Heart left ventricle (tissue), 16 donors: ENCODE measurements at regions of chr1 and their contacts with region 1.

Region 1: DNA sequence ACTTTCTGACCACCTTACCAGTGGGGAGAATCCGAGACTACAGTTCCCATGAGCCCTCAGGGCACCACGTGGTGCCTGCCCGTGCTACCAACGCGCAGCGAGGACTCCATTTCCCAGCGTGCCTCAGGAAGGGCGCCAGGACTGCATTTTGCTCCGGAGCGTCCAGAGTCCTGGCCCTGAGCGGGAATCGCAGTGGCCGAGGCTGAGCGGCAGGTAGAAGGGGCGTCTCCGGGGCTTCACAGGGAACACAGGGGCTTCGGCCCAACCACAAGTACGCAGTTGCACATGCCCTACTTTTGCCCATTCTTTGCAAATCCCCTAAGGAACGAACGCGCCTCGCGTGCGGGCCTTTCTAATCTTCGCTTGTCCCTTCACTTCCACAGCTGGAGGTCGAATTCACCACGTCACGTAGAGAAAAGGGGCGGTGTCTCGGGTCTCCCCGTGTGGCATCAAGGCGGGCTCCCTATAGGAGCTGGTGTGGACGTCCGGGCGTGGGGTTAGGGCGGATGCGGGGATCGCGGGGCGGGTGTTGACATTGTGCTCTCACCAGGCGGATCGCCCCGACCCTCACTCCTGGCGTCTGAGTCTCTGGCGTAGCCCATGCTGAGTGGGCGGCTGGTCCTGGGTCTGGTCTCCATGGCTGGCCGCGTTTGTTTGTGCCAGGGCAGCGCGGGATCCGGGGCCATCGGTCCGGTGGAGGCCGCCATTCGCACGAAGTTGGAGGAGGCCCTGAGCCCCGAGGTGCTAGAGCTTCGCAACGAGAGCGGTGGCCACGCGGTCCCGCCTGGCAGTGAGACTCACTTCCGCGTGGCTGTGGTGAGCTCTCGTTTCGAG is at the start of gene BOLA1:
- DNase-seq: peak; percentile 94 to 97 (median 95)
- ATAC-seq: peak; percentile 99 to 100 (median 100)
- H3K4me3 ChIP-seq: peak within 1 kb of the TSS; percentile 35 to 78 (median 64)
- H3K27ac ChIP-seq: peak within 1 kb of the TSS; percentile 31 to 95 (median 87)
- H3K4me1 ChIP-seq: peaks cover 0 to 13% (median 7%) of the 10 kb centered on the region in 12 donors
- H3K27me3 ChIP-seq: no peaks in the 10 kb centered on the region
- CTCF ChIP-seq: no peak
- POLR2A ChIP-seq: peak in 1 of 2 donors; percentile 87
- total RNA-seq, gene BOLA1: 12.5 to 39.4 (median 14.0) TPM

Region 2: DNA sequence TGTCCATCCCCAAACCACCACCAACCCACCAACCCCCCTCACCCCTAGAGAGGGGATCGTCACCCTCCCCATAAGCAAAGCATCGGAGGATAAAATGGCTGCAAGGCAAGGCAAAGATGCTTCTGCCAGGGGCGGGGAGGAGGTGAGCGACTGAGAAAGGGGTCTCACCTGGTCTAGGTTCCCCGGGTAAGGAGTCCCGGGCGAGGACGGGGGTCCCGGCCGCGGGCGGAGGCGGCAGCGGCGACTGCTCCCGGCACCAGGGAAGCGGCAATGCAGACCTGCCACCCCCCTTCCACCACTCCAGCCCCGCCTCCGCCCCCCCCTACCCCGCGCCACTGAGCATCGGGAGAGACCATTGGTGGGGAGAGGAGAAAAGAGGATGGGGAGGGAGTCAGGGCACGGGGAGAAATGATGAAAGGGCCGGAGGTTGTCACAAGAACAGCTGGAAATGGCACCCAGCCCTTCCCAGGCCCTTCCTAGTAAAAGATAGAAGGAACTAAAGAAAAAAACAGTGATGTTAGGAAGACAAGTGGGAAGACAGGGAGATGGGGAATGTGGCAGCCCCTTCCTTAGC is 18.0 kb after region 1 on chr1 and contains the start of gene SV2A:
- intact Hi-C with region 1: loop called in 1 of 10 experiments (anchors 2 kb)
- DNase-seq: peak in 1 of 5 donors; percentile 37
- ATAC-seq: peak in 3 of 4 donors; percentile 42 to 59 (median 45)
- H3K4me3 ChIP-seq: peak within 1 kb of the TSS in 11 of 12 donors; percentile 8 to 60 (median 47)
- H3K27ac ChIP-seq: no peak within 1 kb of the TSS
- H3K4me1 ChIP-seq: peaks cover 0 to 18% (median 0%) of the 10 kb centered on the region in 12 donors
- H3K27me3 ChIP-seq: peaks cover 0 to 12% (median 0%) of the 10 kb centered on the region in 9 donors
- CTCF ChIP-seq: no peak
- POLR2A ChIP-seq: no peak
- total RNA-seq, gene SV2A: 0.20 to 1.4 (median 0.43) TPM

Region 3: GRCh38 chr1:149927503-149928387 is 28.1 kb after region 1 on chr1 and contains the start of gene SF3B4:
- intact Hi-C with region 1: loop called in 1 of 10 experiments (anchors 1 kb)
- DNase-seq: peak; percentile 96 to 98 (median 97)
- ATAC-seq: peak; percentile 98 to 99 (median 98)
- H3K4me3 ChIP-seq: peak within 1 kb of the TSS; percentile 69 to 98 (median 92)
- H3K27ac ChIP-seq: peak within 1 kb of the TSS; percentile 91 to 99 (median 96)
- H3K4me1 ChIP-seq: peaks cover 5 to 43% (median 29%) of the 10 kb centered on the region in 12 donors
- H3K27me3 ChIP-seq: no peaks in the 10 kb centered on the region
- CTCF ChIP-seq: peak in 2 of 12 donors; percentile 9 to 11
- POLR2A ChIP-seq: peak in 1 of 2 donors; percentile 96
- total RNA-seq, gene SF3B4: 10.2 to 32.7 (median 23.7) TPM

Region 4: DNA sequence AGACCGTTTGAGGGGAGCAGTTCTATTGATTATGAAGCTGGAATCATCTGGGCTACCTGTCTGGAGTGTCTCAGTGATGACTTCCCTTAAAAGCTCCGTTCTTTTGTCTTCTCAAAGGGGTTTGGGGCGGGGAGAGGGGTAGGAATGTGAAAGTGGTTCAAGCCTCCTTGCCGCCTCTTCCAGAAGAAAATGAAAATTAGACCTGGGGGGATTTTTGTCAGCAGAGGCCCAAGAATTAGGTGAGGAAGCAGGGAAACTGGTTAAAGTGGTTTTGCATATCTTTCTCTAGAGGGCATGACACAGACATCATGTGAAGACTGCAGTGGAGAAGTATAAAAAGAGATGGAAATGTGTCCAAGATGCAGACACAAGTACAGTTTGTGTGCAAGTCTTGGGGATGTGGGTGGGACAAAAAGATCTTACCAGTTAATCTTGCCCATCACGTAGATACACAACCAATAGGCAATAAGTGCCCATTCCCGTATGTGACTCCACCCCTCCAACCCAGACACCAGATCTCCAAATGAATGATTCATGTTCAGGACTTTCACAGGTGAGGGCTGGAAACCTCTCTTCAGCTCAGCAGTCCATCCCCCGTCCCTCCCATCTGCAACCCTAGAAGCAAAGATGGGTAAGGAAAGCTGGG is 37.5 kb after region 1 on chr1:
- intact Hi-C with region 1: loop called in 1 of 10 experiments (anchors 5 kb)
- DNase-seq: no peak
- ATAC-seq: no peak
- H3K4me3 ChIP-seq: peak overlapping the region; percentile 22 to 73 (median 55)
- H3K27ac ChIP-seq: peak overlapping the region in 9 of 12 donors; percentile 10 to 88 (median 59)
- H3K4me1 ChIP-seq: peaks cover 0 to 45% (median 35%) of the 10 kb centered on the region in 12 donors
- H3K27me3 ChIP-seq: no peaks in the 10 kb centered on the region
- CTCF ChIP-seq: no peak
- POLR2A ChIP-seq: no peak

Region 5: DNA sequence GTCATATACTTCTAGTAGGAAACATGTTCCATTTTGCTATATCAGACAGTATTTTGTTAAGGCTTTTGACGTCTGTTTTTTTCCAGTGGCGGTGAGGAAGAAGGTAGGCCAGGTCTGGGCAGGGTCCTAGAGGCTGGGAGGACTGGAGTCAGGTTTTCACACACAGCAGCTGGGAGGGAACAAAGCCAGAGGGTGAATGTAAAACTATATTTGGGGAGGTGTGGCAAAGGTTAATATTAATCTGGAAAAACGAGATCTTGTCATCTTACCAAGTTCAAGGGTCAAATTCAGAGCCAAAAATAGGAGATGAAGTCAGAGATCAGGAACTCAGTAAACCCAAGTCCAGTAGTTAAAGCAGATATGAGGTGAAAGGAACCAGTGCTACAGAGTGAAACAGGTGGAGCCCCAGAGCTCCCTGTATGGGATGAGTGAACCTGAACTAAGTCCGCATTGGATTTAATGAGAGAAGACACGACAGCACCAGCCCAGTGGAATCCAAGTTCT is 121.6 kb after region 1 on chr1:
- intact Hi-C with region 1: no loop called
- DNase-seq: no peak
- ATAC-seq: no peak
- H3K4me3 ChIP-seq: no peak overlapping the region
- H3K27ac ChIP-seq: no peak overlapping the region
- H3K4me1 ChIP-seq: peaks cover 0 to 7% (median 0%) of the 10 kb centered on the region in 12 donors
- H3K27me3 ChIP-seq: peaks cover 0 to 61% (median 0%) of the 10 kb centered on the region in 9 donors
- CTCF ChIP-seq: no peak
- POLR2A ChIP-seq: no peak

Region 6: GRCh38 chr1:150053926-150054325 is 154.2 kb after region 1 on chr1:
- intact Hi-C with region 1: loop called in 1 of 10 experiments (anchors 10 kb)
- DNase-seq: no peak
- ATAC-seq: no peak
- H3K4me3 ChIP-seq: no peak overlapping the region
- H3K27ac ChIP-seq: no peak overlapping the region
- H3K4me1 ChIP-seq: peaks cover 0 to 20% (median 0%) of the 10 kb centered on the region in 12 donors
- H3K27me3 ChIP-seq: no peaks in the 10 kb centered on the region
- CTCF ChIP-seq: no peak
- POLR2A ChIP-seq: no peak

Region 7: GRCh38 chr1:150067184-150068036 is 167.7 kb after region 1 on chr1 and contains the start of gene VPS45:
- intact Hi-C with region 1: loop called in 1 of 10 experiments (anchors 10 kb)
- DNase-seq: peak; percentile 92 to 96 (median 93)
- ATAC-seq: peak; percentile 97 to 99 (median 98)
- H3K4me3 ChIP-seq: peak within 1 kb of the TSS; percentile 37 to 92 (median 78)
- H3K27ac ChIP-seq: peak within 1 kb of the TSS; percentile 80 to 98 (median 92)
- H3K4me1 ChIP-seq: peaks cover 0 to 49% (median 22%) of the 10 kb centered on the region in 12 donors
- H3K27me3 ChIP-seq: no peaks in the 10 kb centered on the region
- CTCF ChIP-seq: peak in 5 of 12 donors; percentile 5 to 45 (median 9)
- POLR2A ChIP-seq: peak in 1 of 2 donors; percentile 43
- total RNA-seq, gene VPS45: 39.1 to 67.7 (median 49.5) TPM

Region 8: GRCh38 chr1:150162862-150163706 is 263.4 kb after region 1 on chr1:
- intact Hi-C with region 1: loop called in 1 of 10 experiments (anchors 10 kb)
- DNase-seq: peak; percentile 83 to 91 (median 89)
- ATAC-seq: peak; percentile 84 to 94 (median 92)
- H3K4me3 ChIP-seq: peak overlapping the region in 9 of 12 donors; percentile 24 to 55 (median 38)
- H3K27ac ChIP-seq: peak overlapping the region; percentile 43 to 98 (median 90)
- H3K4me1 ChIP-seq: peaks cover 0 to 82% (median 33%) of the 10 kb centered on the region in 12 donors
- H3K27me3 ChIP-seq: no peaks in the 10 kb centered on the region
- CTCF ChIP-seq: no peak
- POLR2A ChIP-seq: peak in 1 of 2 donors; percentile 70